ENCODE measurements at regions of chr2 and their contacts with region 1.

Region 1: DNA sequence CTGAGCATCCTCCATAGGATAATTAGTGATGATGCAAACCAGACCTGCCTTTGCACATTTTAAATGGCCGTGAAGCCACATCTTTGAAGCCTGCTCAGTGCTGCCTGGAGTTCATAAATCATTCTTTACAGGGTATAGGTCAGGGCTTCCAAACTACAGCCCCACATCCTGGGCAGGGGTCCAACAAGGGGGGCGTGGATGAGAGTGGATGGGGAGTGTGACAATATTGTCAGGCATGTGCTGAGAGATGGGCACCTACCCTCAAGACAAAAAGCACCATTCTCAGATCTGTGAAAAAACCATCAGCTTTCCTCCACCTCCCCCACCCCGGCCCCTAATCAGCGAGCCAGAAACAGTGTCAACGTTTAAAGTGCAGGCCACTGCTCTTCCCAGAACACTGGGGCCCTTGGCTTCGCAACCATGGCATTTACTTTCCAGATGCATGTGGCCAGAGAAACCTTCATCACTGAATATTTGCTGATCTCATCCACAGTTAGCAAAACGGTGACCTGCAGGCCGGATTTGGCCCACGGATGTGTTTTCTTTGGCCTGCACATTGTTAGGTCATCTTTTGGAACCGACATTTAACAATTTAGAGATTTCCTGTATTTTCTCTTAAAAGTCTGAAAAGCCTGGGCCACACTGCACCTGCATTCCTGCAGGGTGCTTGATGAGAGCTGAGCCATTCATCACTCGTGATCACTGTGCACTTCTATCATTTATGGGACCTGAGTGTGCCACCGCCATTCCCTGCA is 130.7 kb downstream of the ANKRD44 start:
- DNase-seq: no peak
- ATAC-seq: no peak
- H3K4me3 ChIP-seq: no peak overlapping the region
- H3K27ac ChIP-seq: no peak overlapping the region
- H3K4me1 ChIP-seq: no peaks in the 10 kb centered on the region
- H3K27me3 ChIP-seq: no peaks in the 10 kb centered on the region
- CTCF ChIP-seq: no peak
- EP300 ChIP-seq: no peak
- POLR2A ChIP-seq: no peak
- RAD21 ChIP-seq: no peak

Region 2: DNA sequence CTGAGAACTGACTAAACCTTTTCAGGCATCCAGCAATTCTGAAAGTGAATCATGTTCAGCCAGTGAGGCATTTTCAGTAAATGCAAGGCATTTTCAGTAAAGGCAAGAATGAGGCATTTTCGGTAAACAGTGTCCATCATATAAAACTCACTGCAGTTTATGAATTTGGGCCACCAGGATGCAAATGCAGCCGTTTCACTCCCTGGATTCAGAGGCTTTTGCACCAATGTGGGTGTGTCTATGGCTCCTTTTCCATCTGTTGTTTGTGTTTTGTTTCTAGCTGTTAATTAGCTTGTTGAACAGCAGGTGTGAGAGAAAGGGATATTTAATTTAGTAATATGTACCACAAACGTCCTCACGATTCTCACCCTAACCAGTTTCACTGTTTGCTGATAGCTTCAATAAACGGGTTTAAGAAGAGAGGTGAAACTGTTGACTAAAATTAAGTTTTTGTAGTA is 137.2 kb before region 1 on chr2:
- CTCF ChIA-PET with region 1: no interaction called
- POLR2A ChIA-PET with region 1: no interaction called
- RAD21 ChIA-PET with region 1: no interaction called
- SMC1A ChIA-PET with region 1: no interaction called
- in situ Hi-C with region 1: no loop called
- intact Hi-C with region 1: no loop called
- DNase-seq: peak; percentile 15
- ATAC-seq: peak; percentile 75
- H3K4me3 ChIP-seq: no peak overlapping the region
- H3K27ac ChIP-seq: no peak overlapping the region; the same call in 1 of the 2 replicates
- H3K4me1 ChIP-seq: no peaks in the 10 kb centered on the region
- H3K27me3 ChIP-seq: no peaks in the 10 kb centered on the region
- CTCF ChIP-seq: no peak
- EP300 ChIP-seq: no peak
- POLR2A ChIP-seq: no peak
- RAD21 ChIP-seq: no peak

Region 3: GRCh38 chr2:197209742-197210408 is 30.0 kb after region 1 on chr2:
- CTCF ChIA-PET with region 1: no interaction called
- POLR2A ChIA-PET with region 1: no interaction called
- RAD21 ChIA-PET with region 1: no interaction called
- SMC1A ChIA-PET with region 1: no interaction called
- in situ Hi-C with region 1: no loop called
- intact Hi-C with region 1: no loop called
- DNase-seq: peak; percentile 76
- ATAC-seq: peak; percentile 47
- H3K4me3 ChIP-seq: peak overlapping the region; percentile 28
- H3K27ac ChIP-seq: peak overlapping the region; percentile 97
- H3K4me1 ChIP-seq: peaks cover 94% of the 10 kb centered on the region
- H3K27me3 ChIP-seq: no peaks in the 10 kb centered on the region
- CTCF ChIP-seq: no peak
- EP300 ChIP-seq: peak in 1 of 2 experiments; percentile 21; a peak in 2 of 4 replicates
- POLR2A ChIP-seq: no peak
- RAD21 ChIP-seq: no peak

Region 4: GRCh38 chr2:197786010-197786877 is 606.3 kb after region 1 on chr2:
- CTCF ChIA-PET with region 1: no interaction called
- POLR2A ChIA-PET with region 1: no interaction called
- RAD21 ChIA-PET with region 1: no interaction called
- SMC1A ChIA-PET with region 1: no interaction called
- in situ Hi-C with region 1: no loop called
- intact Hi-C with region 1: loop called (anchors 10 kb)
- DNase-seq: no peak
- ATAC-seq: peak; percentile 85
- H3K4me3 ChIP-seq: no peak overlapping the region
- H3K27ac ChIP-seq: no peak overlapping the region
- H3K4me1 ChIP-seq: no peaks in the 10 kb centered on the region
- H3K27me3 ChIP-seq: no peaks in the 10 kb centered on the region
- CTCF ChIP-seq: peak; percentile 47 to 78 (median 54)
- EP300 ChIP-seq: no peak
- POLR2A ChIP-seq: no peak
- RAD21 ChIP-seq: no peak